ENCODE measurements at regions of chr1 and their contacts with region 1.

Region 1: GRCh38 chr1:6343506-6344405 is 49.8 kb downstream of the ACOT7 start:
- DNase-seq: peak; percentile 92
- H3K4me3 Mint-ChIP-seq: no peak overlapping the region
- H3K27ac Mint-ChIP-seq: no peak overlapping the region
- H3K4me1 Mint-ChIP-seq: peaks cover 11% of the 10 kb centered on the region
- H3K27me3 Mint-ChIP-seq: no peaks in the 10 kb centered on the region

Region 2: DNA sequence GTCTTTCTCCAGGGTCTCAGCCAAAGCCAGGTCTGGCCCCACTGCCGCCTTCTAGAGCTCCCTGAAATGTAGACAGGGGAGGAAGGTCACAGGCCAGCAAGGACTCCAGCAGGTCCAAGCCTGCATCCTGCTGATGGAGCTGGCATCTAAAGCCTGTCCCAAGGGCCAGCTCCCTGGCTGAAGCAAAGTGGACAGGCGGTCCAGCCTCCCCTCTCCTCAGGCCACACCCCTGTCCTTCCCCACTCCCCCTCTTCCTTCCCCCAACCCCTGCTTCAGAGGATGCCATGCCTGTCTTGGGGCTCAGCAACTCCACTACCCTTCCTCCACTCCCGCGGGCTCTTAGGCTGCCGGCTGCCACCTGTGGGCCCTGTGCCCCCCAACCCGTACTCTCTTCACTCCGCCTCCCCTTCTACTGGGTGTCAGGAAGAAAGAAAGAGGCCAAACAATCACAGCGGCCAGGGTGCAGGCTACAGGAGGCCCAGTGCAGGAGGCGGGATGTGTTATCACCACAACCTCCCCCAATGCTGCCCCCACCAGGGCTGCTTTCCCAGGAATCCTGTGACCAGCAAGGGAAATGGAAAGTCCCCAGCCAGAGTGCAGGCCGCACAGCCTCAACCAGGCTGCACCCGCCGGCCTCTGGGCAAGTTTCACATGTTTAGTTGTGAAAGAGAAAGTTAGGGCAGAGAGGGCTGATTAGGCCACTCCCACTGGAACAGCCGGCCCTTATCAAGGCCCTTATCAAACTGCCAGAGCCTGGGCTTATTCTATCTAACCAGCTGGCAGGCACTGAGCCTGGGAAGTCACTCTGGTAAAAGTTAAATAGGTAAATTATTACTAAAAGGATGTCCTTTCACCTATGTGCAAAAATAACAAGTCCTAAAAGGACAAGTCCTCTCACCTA is 15.7 kb after region 1 on chr1:
- intact Hi-C with region 1: loop called (anchors 1 kb)
- DNase-seq: peak; percentile 93
- H3K4me3 Mint-ChIP-seq: peak overlapping the region; percentile 80
- H3K27ac Mint-ChIP-seq: peak overlapping the region; percentile 94
- H3K4me1 Mint-ChIP-seq: peaks cover 39% of the 10 kb centered on the region
- H3K27me3 Mint-ChIP-seq: no peaks in the 10 kb centered on the region

Region 3: DNA sequence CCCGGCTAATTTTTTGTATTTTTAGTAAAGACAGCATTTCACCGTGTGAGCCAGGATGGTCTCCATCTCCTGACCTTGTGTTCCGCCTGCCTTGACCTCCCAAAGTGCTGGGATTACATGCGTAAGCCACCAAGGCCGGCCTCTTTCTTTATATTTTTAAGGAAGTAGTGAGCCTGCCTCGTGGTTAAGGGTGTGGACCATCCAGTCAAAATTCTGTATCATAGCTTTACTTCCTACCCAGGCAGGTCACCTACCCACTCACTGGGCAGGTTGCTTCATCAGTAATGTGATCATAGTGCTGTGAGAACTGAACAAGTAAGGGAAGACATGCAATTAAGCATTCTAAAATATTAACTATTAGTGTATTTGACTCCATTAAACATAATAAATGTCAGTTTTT is 57.9 kb after region 1 on chr1:
- intact Hi-C with region 1: loop called (anchors 1 kb)
- DNase-seq: no peak
- H3K4me3 Mint-ChIP-seq: no peak overlapping the region
- H3K27ac Mint-ChIP-seq: no peak overlapping the region
- H3K4me1 Mint-ChIP-seq: peaks cover 11% of the 10 kb centered on the region
- H3K27me3 Mint-ChIP-seq: peaks cover 16% of the 10 kb centered on the region